ENCODE measurements at regions of chr20 and their contacts with region 1.

Region 1: DNA sequence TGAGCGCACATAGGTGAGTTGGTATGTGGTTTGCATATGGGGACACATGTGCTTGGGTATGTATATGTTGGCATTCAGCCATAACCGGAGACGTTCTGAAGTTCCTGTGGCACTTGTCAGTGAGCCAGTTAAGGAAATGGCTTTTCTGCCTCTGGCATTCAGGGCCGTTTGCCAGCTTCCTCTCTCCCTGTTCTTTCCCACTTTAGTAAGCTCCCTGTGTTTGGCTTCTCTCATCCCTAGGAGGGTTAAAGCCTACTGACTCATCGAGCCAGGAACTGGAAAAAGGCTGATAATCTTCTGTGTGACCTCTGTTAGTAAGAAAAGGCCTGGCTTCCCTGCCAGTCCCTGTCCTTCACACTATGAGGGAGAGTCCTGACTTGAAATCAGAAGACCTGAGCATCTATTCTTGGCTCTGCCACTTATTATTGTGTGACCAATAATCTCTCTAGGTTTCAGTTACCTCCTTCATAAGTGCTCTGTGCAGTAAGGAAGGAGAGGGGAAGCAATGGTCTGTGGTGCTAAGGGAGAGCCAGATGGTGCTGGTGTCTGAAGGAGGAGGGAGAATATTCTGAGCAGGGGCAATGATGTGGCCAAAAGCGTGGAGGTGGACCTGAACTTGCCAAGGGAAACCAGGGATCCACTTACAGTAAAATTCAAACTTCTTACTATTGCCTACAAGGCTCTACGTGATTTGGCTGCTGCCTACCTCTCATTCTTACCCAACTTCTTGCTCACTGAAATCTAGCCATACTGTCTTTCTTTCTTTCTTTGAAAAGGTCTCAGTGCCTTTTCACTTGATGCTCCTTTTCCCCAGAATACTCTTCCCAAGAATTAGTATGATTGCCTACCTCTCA is 31.4 kb downstream of the ACSS2 start:
- DNase-seq: peak in 4 of 5 donors; percentile 57 to 80 (median 68)
- ATAC-seq: peak; percentile 90 to 97 (median 97)
- H3K4me3 ChIP-seq: no peak overlapping the region
- H3K27ac ChIP-seq: peak overlapping the region; percentile 50 to 89 (median 80)
- H3K4me1 ChIP-seq: peaks cover 8 to 47% (median 25%) of the 10 kb centered on the region in 12 donors
- H3K27me3 ChIP-seq: no peaks in the 10 kb centered on the region
- CTCF ChIP-seq: no peak
- POLR2A ChIP-seq: no peak

Region 2: GRCh38 chr20:34948030-34948429 is 40.2 kb after region 1 on chr20:
- intact Hi-C with region 1: loop called in 2 of 10 experiments (anchors 5 kb)
- DNase-seq: no peak
- ATAC-seq: peak in 1 of 4 donors; percentile 41
- H3K4me3 ChIP-seq: no peak overlapping the region
- H3K27ac ChIP-seq: peak overlapping the region in 1 of 12 donors; percentile 13
- H3K4me1 ChIP-seq: peaks cover 0 to 20% (median 6%) of the 10 kb centered on the region in 12 donors
- H3K27me3 ChIP-seq: no peaks in the 10 kb centered on the region
- CTCF ChIP-seq: no peak
- POLR2A ChIP-seq: no peak

Region 3: DNA sequence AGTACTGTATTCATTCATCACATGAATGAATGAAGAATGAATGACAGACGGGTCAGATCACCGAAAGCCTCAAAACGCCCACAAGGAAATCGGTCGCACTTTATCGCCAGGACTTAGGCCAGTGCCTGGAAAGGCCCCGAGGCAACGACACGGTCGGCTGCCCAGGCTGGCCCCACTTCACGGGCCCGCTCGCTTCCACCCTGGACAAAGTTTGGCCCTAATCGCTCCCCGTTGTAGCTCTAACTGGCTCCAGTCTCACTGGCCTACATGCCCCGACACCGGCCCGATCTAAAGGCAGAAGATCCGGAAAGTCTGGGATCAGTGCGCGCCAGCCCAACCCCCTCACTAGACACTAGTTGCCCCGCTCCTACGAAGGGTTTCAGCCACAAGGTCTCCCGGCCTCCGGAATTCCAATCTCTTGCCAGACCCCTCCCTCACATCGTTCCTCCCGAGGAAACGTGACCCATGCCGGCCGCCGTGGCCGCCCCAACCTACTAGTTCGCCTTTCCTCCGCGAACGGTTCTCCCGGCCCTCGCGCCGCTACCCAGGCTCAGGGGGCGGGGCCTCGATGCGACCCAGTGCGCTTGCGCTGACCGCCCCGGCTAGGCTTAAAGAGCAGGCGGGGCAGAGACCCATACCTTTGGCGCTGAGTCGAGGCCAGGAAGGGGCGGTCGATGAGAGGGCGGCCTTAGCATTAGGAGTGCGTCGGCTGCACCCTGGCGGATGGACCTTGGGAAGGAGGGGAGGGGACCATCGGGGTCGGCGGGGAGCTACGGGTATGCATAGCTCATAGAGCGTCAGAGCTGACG is 47.6 kb after region 1 on chr20 and contains the starts of genes GSS and MYH7B:
- intact Hi-C with region 1: loop called in 1 of 10 experiments (anchors 5 kb)
- DNase-seq: peak; percentile 97 to 99 (median 98)
- ATAC-seq: peak; percentile 94 to 97 (median 96)
- H3K4me3 ChIP-seq: peak within 1 kb of the TSS; percentile 42 to 85 (median 70)
- H3K27ac ChIP-seq: peak within 1 kb of the TSS; percentile 84 to 96 (median 94)
- H3K4me1 ChIP-seq: peaks cover 0 to 31% (median 20%) of the 10 kb centered on the region in 12 donors
- H3K27me3 ChIP-seq: no peaks in the 10 kb centered on the region
- CTCF ChIP-seq: peak in 11 of 12 donors; percentile 21 to 69 (median 51)
- POLR2A ChIP-seq: peak in 1 of 2 donors; percentile 79
- total RNA-seq, gene GSS: 17.8 to 38.1 (median 26.8) TPM
- total RNA-seq, gene MYH7B: 50.7 to 306 (median 144) TPM

Region 4: GRCh38 chr20:35111141-35111888 is 203.5 kb after region 1 on chr20:
- intact Hi-C with region 1: no loop called
- DNase-seq: no peak
- ATAC-seq: peak in 3 of 4 donors; percentile 24 to 84 (median 41)
- H3K4me3 ChIP-seq: no peak overlapping the region
- H3K27ac ChIP-seq: peak overlapping the region in 2 of 12 donors; percentile 46 to 64
- H3K4me1 ChIP-seq: peaks cover 0 to 10% (median 0%) of the 10 kb centered on the region in 12 donors
- H3K27me3 ChIP-seq: no peaks in the 10 kb centered on the region
- CTCF ChIP-seq: no peak
- POLR2A ChIP-seq: no peak